Heart right ventricle (tissue), 16 donors: ENCODE measurements at regions of chr11 and their contacts with region 1.

Region 1: GRCh38 chr11:126440792-126441514 is 85.5 kb downstream of the ST3GAL4 start:
- DNase-seq: peak; percentile 73 to 80
- ATAC-seq: peak; percentile 29 to 77 (median 72)
- H3K4me3 ChIP-seq: no peak overlapping the region
- H3K27ac ChIP-seq: no peak overlapping the region
- H3K4me1 ChIP-seq: peaks cover 4 to 32% (median 16%) of the 10 kb centered on the region in 9 donors
- H3K27me3 ChIP-seq: peaks cover 0 to 8% (median 0%) of the 10 kb centered on the region in 7 donors
- CTCF ChIP-seq: peak; percentile 81 to 98 (median 96)

Region 2: GRCh38 chr11:126480410-126481302 is 39.7 kb after region 1 on chr11:
- intact Hi-C with region 1: loop called (anchors 1 to 5 kb)
- DNase-seq: peak; percentile 68 to 87
- ATAC-seq: peak; percentile 80 to 91 (median 88)
- H3K4me3 ChIP-seq: peak overlapping the region in 3 of 10 donors; percentile 12 to 18 (median 17)
- H3K27ac ChIP-seq: peak overlapping the region in 8 of 10 donors; percentile 17 to 77 (median 56)
- H3K4me1 ChIP-seq: peaks cover 0 to 13% (median 5%) of the 10 kb centered on the region in 9 donors
- H3K27me3 ChIP-seq: no peaks in the 10 kb centered on the region
- CTCF ChIP-seq: peak; percentile 87 to 98 (median 95)